Dorsolateral prefrontal cortex (tissue), 120 donors: ENCODE measurements at regions of chr1 and their contacts with region 1.

Region 1: DNA sequence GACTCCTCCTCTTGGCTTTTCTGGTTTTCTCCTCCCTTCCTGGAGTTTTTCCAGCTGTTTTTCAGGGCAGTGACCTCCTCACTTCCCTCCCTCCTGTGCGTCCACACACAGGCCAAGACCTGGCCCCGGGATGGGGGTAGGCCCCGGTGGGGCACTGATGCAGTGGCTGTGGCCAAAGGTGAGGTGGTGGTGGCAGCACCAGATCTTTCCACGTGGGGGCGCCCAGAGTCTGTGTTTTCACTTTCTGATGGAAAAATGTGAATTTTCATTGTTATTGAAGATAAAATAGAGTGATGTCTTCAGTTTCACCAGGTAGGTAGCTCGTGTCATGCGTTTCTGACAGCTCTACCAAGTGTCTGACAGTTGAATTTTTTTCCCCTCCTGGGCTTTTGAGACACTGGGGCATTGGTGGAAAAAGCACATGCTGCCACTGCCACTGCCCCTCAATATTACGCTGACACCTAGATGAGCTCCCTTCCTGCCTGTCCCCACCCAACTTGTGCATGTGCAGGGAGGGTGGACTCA is 39.9 kb upstream of the MAGOH start:
- DNase-seq: peak in 9 of 10 donors; percentile 59 to 75 (median 70)
- H3K4me3 ChIP-seq: no peak overlapping the region
- H3K27ac ChIP-seq: no peak overlapping the region
- H3K27me3 ChIP-seq: no peaks in the 10 kb centered on the region
- CTCF ChIP-seq: peak; percentile 61 to 98 (median 91)

Region 2: DNA sequence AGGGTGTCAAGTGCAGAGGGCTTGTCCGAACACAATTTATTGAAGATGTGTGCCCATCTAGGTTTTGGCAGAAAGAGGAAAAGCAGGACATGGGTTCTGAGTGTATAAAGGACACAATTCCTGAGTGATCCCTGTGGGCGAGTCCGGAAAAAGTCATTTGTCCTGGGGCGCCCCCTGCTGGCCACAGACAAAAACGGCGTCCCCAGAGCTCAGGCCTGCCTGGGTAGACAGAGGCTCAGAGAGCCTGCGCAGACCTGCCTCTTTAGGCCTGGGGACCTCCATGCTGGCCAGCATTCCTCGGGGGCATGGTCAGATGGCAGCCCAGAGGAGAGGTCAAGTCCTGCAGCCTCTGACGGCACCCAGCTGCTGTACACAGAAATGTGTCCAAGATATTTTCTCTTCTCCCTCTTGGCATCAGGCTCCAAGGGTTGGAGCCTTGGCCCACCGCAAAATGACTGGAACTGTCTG is 115.1 kb after region 1 on chr1:
- intact Hi-C with region 1: loop called (anchors 1 kb)
- DNase-seq: peak; percentile 74 to 92 (median 82)
- H3K4me3 ChIP-seq: no peak overlapping the region
- H3K27ac ChIP-seq: no peak overlapping the region
- H3K27me3 ChIP-seq: no peaks in the 10 kb centered on the region
- CTCF ChIP-seq: peak; percentile 92 to 100 (median 97)